Activated CD4-positive, alpha-beta T cell treated with anti-CD3 and anti-CD28 coated beads for 36 hours (primary cell): ENCODE measurements at regions of chr6 and their contacts with region 1.

Region 1: DNA sequence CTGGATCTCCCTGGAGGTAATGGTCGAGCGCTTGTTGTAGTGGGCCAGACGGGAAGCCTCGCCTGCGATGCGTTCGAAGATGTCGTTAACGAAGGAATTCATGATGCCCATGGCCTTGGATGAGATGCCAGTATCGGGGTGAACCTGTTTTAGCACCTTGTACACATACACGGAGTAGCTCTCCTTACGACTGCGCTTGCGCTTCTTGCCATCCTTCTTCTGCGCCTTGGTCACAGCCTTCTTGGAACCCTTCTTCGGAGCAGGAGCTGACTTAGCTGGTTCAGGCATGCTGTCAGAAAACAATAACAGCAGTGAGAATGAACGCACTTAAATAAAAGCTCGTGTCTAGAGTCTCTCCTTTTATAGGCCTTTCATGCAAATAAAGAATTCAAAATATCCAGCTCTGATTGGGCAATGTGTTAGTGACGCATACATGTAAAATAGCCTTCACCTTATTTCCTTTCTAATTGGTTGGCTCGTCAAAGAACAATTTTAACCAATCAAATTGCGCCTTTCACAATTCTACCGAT is 129.2 kb downstream of the HFE start:
- DNase-seq: peak; percentile 88
- ATAC-seq: peak; percentile 76
- H3K4me3 Mint-ChIP-seq: no peak overlapping the region
- H3K27ac Mint-ChIP-seq: no peak overlapping the region
- H3K4me1 Mint-ChIP-seq: peaks cover 2% of the 10 kb centered on the region
- H3K27me3 Mint-ChIP-seq: no peaks in the 10 kb centered on the region

Region 2: GRCh38 chr6:26103770-26104456 is 112.5 kb before region 1 on chr6:
- CTCF ChIA-PET with region 1: interaction called, 3 read pairs
- POLR2A ChIA-PET with region 1: interaction called, 13 read pairs
- intact Hi-C with region 1: no loop called
- DNase-seq: peak; percentile 92
- ATAC-seq: peak; percentile 89
- H3K4me3 Mint-ChIP-seq: peak overlapping the region; percentile 82
- H3K27ac Mint-ChIP-seq: peak overlapping the region; percentile 97
- H3K4me1 Mint-ChIP-seq: peaks cover 16% of the 10 kb centered on the region
- H3K27me3 Mint-ChIP-seq: no peaks in the 10 kb centered on the region

Region 3: DNA sequence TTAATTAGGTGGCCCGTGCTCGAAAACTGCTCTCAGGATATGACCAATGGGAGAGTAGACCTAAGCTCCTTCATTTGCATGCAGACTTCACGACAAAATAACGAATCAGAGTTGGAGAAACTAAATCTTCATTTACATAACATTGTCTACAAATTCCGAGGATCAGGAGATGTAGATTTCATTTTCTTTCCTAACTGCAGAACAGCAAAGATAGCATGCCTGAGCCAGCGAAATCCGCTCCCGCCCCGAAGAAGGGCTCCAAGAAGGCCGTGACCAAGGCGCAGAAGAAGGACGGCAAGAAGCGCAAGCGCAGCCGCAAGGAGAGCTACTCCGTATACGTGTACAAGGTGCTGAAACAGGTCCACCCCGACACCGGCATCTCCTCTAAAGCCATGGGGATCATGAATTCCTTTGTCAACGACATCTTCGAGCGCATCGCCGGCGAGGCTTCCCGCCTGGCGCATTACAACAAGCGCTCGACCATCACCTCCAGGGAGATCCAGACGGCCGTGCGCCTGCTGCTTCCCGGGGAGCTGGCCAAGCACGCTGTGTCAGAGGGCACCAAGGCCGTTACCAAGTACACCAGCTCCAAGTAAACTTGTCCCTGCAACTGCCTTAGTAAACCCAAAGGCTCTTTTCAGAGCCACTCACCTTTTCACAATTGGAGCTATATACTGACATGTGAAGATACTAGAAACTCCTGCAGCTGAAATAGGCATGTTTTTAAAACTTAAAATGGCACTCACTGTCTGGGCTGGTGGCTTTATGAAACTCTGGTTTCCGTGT is 32.6 kb before region 1 on chr6:
- CTCF ChIA-PET with region 1: interaction called, 6 read pairs
- POLR2A ChIA-PET with region 1: interaction called, 58 read pairs
- intact Hi-C with region 1: no loop called
- DNase-seq: peak; percentile 82
- ATAC-seq: peak; percentile 80
- H3K4me3 Mint-ChIP-seq: peak overlapping the region; percentile 89
- H3K27ac Mint-ChIP-seq: peak overlapping the region; percentile 92
- H3K4me1 Mint-ChIP-seq: peaks cover 45% of the 10 kb centered on the region
- H3K27me3 Mint-ChIP-seq: no peaks in the 10 kb centered on the region

Region 4: DNA sequence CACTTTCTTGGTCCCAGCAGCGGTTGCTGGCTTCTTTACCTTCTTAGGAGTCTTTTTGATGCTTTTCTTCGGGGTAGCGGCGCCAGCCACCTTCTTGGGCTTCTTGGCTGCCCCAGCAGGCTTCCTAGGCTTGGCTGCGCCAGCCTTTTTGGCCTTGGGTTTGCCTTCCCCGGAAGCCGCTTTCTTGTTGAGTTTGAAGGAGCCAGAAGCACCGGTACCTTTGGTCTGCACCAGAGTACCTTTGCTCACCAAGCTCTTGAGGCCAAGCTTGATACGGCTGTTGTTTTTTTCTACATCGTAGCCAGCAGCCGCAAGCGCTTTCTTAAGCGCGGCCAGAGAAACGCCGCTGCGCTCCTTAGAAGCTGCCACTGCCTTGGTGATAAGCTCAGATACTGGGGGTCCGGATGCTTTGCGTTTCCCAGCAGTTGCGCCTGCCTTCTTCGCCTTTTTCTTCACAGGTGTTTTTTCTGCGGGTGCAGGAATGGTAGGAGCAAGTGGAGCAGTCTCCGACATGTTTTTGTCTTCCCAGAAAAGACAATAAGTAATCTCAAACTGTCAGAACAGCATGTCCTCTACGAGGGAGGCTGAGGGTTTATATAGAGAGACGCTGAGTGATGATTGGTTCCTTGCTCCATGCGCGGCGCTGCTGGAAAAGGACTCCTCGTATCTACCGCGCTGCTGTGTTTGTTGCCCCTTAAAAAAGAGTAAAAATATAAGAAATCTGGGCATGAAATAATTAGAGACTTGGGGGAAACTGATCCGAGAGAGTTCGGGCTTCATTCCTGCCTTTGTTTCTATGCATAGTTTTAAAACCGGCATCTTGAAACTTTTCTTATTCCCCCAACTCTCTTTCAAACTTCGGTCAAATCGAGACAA is 18.2 kb after region 1 on chr6:
- CTCF ChIA-PET with region 1: interaction called, 16 read pairs
- POLR2A ChIA-PET with region 1: interaction called, 190 read pairs
- intact Hi-C with region 1: loop called (anchors 1 to 2 kb)
- DNase-seq: peak; percentile 81
- ATAC-seq: peak; percentile 73
- H3K4me3 Mint-ChIP-seq: peak overlapping the region; percentile 77
- H3K27ac Mint-ChIP-seq: peak overlapping the region; percentile 100
- H3K4me1 Mint-ChIP-seq: peaks cover 31% of the 10 kb centered on the region
- H3K27me3 Mint-ChIP-seq: peaks cover 2% of the 10 kb centered on the region

Region 5: GRCh38 chr6:26249957-26250697 is 33.7 kb after region 1 on chr6:
- CTCF ChIA-PET with region 1: interaction called, 16 read pairs
- POLR2A ChIA-PET with region 1: interaction called, 73 read pairs
- intact Hi-C with region 1: loop called in 1 of 2 experiments (anchors 1 kb)
- DNase-seq: peak; percentile 85
- ATAC-seq: peak; percentile 63
- H3K4me3 Mint-ChIP-seq: peak overlapping the region; percentile 86
- H3K27ac Mint-ChIP-seq: peak overlapping the region; percentile 97
- H3K4me1 Mint-ChIP-seq: peaks cover 14% of the 10 kb centered on the region
- H3K27me3 Mint-ChIP-seq: no peaks in the 10 kb centered on the region